MCF 10A (cell line): ENCODE measurements at regions of chr19 and their contacts with region 1.

Region 1: GRCh38 chr19:28737021-28737895 is 475.7 kb downstream of the UQCRFS1 start:
- DNase-seq: no peak
- H3K4me3 Mint-ChIP-seq: no peak overlapping the region
- H3K27ac Mint-ChIP-seq: no peak overlapping the region
- H3K4me1 Mint-ChIP-seq: no peaks in the 10 kb centered on the region
- H3K27me3 Mint-ChIP-seq: no peaks in the 10 kb centered on the region
- CTCF ChIP-seq: peak; percentile 11

Region 2: DNA sequence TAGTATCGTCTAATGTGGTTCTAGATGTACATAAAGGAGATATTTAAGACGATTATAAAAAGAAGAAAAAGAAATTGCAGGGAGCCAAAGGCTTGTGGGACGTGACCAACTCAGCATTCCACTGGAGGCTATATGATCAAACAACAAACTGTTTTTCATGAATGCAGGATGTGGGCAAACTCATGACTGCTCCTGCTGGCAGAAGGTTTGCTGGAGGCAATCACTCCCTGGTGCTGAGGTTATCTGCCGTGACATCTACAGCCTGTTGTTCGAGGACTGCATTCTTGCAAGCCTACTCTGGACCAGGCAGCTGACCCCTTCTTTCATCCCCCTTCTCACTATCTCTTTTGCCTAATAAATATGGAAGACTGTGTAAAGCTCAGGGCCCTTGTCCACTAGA is 42.4 kb before region 1 on chr19:
- CTCF ChIA-PET with region 1: no interaction called
- POLR2A ChIA-PET with region 1: no interaction called
- intact Hi-C with region 1: no loop called
- DNase-seq: no peak
- H3K4me3 Mint-ChIP-seq: no peak overlapping the region
- H3K27ac Mint-ChIP-seq: no peak overlapping the region
- H3K4me1 Mint-ChIP-seq: no peaks in the 10 kb centered on the region
- H3K27me3 Mint-ChIP-seq: no peaks in the 10 kb centered on the region
- CTCF ChIP-seq: no peak

Region 3: GRCh38 chr19:28878862-28879566 is 141.8 kb after region 1 on chr19:
- CTCF ChIA-PET with region 1: interaction called, 3 read pairs
- POLR2A ChIA-PET with region 1: no interaction called
- intact Hi-C with region 1: loop called (anchors 2 kb)
- DNase-seq: peak; percentile 35
- H3K4me3 Mint-ChIP-seq: no peak overlapping the region
- H3K27ac Mint-ChIP-seq: no peak overlapping the region
- H3K4me1 Mint-ChIP-seq: no peaks in the 10 kb centered on the region
- H3K27me3 Mint-ChIP-seq: no peaks in the 10 kb centered on the region
- CTCF ChIP-seq: peak; percentile 37

Region 4: GRCh38 chr19:29263305-29264135 is 526.3 kb after region 1 on chr19:
- CTCF ChIA-PET with region 1: interaction called, 15 read pairs
- POLR2A ChIA-PET with region 1: no interaction called
- intact Hi-C with region 1: no loop called
- DNase-seq: no peak
- H3K4me3 Mint-ChIP-seq: no peak overlapping the region
- H3K27ac Mint-ChIP-seq: no peak overlapping the region
- H3K4me1 Mint-ChIP-seq: no peaks in the 10 kb centered on the region
- H3K27me3 Mint-ChIP-seq: no peaks in the 10 kb centered on the region
- CTCF ChIP-seq: peak; percentile 27

Region 5: GRCh38 chr19:29596885-29597525 is 859.7 kb after region 1 on chr19:
- CTCF ChIA-PET with region 1: interaction called, 13 read pairs
- POLR2A ChIA-PET with region 1: no interaction called
- intact Hi-C with region 1: no loop called
- DNase-seq: peak; percentile 46
- H3K4me3 Mint-ChIP-seq: no peak overlapping the region
- H3K27ac Mint-ChIP-seq: no peak overlapping the region
- H3K4me1 Mint-ChIP-seq: no peaks in the 10 kb centered on the region
- H3K27me3 Mint-ChIP-seq: peaks cover 25% of the 10 kb centered on the region
- CTCF ChIP-seq: peak; percentile 44